ENCODE measurements at regions of chr15 and their contacts with region 1.

Region 1: DNA sequence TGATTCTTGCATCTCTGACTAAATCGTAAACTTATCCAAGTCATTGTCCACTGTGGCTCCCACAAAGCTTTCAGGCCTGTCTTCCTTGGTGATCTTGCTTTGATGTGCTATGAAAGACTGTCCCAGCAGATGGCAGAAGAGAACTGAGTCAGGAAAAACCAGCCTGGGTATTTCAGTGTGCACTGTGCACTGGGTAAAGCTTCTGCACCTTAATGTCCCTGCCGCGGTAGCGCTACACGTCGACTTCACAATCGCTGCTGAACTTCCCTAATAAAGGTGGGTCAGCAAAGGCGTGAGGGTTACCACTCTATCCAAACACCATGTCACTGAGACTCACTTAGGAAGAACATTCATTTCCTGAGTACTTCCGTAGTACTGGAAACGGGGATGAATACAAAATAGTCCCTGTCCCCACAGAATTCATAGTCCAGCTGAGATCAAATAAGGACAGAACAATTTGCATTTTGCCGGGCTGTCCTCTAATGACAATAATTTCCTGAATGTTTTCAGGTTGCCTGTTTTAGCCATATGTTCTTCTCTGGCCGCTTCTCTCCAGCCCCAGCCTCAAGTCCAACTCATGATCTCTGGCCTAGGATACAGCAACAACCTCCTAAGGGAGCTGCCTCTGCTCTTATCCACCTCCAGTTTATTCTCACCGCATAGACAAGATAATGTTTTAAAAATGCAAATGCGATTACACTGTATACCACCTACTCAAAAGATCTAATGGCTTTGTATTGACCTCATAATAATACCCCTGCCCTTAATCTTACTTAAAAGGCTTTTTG is 83.6 kb upstream of the AKAP13 start:
- DNase-seq: no peak
- ATAC-seq: peak; percentile 96

Region 2: GRCh38 chr15:84750583-84751092 is 546.2 kb before region 1 on chr15:
- intact Hi-C with region 1: no loop called
- DNase-seq: no peak
- ATAC-seq: no peak

Region 3: GRCh38 chr15:85840065-85840801 is 543.4 kb after region 1 on chr15:
- intact Hi-C with region 1: loop called (anchors 2 kb)
- DNase-seq: peak; percentile 93
- ATAC-seq: peak; percentile 94

Measured in Right ventricle myocardium inferior (tissue), 1 donor.